Heart left ventricle (tissue), 16 donors: ENCODE measurements at regions of chr1 and their contacts with region 1.

Region 1: GRCh38 chr1:28199328-28200233 is 23.1 kb upstream of the PTAFR start:
- DNase-seq: no peak
- ATAC-seq: peak in 1 of 4 donors; percentile 36
- H3K4me3 ChIP-seq: no peak overlapping the region
- H3K27ac ChIP-seq: peak overlapping the region in 1 of 12 donors; percentile 54
- H3K4me1 ChIP-seq: peaks cover 0 to 34% (median 1%) of the 10 kb centered on the region in 12 donors
- H3K27me3 ChIP-seq: no peaks in the 10 kb centered on the region
- CTCF ChIP-seq: no peak
- POLR2A ChIP-seq: no peak

Region 2: DNA sequence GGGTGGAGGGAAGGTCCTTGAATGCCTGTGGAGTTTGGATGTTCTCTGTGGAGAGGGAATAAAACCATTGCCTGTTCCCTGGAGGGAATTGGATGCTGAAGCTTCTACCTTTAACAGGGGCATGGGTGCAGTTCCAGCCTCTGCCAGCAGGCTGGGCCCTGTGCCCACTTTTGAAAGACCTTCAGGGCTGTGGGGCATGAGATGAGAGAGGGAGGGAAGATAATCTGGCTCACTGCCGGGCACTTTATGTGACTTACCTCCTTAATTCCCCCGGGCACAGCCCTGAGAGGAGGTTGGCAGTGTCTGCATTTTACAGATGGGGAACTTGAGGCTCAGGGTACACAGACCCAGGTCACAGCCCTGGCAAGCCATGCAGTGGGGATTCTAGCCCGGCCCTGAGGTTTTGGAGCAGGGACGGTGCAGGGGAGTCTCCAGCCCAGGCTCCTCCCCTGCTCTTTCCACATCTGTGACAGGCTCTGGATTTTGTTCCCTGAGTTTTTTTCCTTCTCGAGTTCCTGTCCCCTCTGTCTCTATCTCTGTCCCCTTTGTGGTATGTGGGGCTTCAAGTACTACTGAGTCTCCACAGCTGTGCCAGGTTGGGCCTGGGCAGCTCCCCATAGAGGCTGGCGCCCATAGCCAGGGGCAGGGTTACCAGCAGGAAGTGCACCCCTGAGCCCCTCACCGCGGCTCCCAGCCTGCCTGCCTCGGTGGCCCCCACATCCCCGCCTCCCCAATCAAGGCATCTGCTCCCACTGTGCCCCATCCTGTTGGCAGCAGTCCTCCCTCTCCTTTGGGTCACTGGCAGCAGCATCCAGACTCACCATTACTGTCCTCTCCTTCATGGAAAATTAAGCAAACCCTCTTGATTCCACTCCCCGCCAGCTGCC is 341.3 kb before region 1 on chr1:
- intact Hi-C with region 1: loop called in 3 of 10 experiments (anchors 10 kb)
- DNase-seq: peak; percentile 75 to 89 (median 81)
- ATAC-seq: peak; percentile 79 to 94 (median 91)
- H3K4me3 ChIP-seq: peak overlapping the region in 1 of 12 donors; percentile 29
- H3K27ac ChIP-seq: peak overlapping the region in 1 of 12 donors; percentile 75
- H3K4me1 ChIP-seq: peaks cover 0 to 35% (median 3%) of the 10 kb centered on the region in 12 donors
- H3K27me3 ChIP-seq: no peaks in the 10 kb centered on the region
- CTCF ChIP-seq: peak; percentile 77 to 96 (median 88)
- POLR2A ChIP-seq: no peak

Region 3: DNA sequence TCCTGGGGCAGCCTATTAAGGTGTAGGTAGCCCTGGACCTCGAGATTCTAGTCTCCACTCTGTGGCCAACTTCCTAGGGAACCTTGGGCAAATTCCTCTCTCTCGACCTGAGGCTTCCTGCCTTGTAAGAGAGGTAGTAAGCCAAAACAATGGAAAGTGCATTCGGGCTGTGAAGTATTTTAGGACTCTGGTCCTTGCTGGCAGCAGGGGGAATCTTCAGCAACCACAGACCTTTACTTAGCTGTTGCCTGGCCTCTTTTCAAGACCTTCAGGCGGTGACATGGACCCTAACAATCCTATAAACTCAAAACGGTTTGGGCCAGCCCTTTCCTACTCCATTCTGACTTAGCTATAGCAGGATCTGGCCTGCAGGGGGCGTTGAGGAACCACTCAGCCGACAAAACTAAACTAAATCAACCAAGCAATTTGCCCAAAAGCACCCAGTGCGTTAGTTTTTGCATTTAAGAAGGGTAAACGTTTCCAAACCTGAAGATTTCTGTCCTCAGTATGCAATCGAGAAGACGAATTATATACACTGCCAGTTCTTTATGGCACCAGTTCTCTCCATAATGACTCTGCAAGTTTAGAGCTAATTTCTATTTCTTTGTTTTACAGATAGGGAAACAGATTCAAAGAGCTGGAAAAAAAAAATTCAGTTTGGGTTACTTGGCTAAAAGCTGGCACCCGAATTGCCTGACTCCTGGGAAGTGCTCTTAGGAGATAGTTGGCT is 48.9 kb after region 1 on chr1:
- intact Hi-C with region 1: no loop called
- DNase-seq: peak; percentile 73 to 86 (median 82)
- ATAC-seq: peak; percentile 37 to 53 (median 48)
- H3K4me3 ChIP-seq: peak overlapping the region in 9 of 12 donors; percentile 11 to 33 (median 20)
- H3K27ac ChIP-seq: peak overlapping the region; percentile 37 to 97 (median 86)
- H3K4me1 ChIP-seq: peaks cover 0 to 74% (median 26%) of the 10 kb centered on the region in 12 donors
- H3K27me3 ChIP-seq: no peaks in the 10 kb centered on the region
- CTCF ChIP-seq: peak; percentile 88 to 98 (median 94)
- POLR2A ChIP-seq: no peak